Cardiac septum (tissue), 1 donor: ENCODE measurements at regions of chr14 and their contacts with region 1.

Region 1: GRCh38 chr14:61694830-61695694 is at the start of gene HIF1A:
- DNase-seq: peak; percentile 98
- total RNA-seq, gene HIF1A: 73.2 TPM

Region 2: GRCh38 chr14:61525293-61526011 is 169.6 kb before region 1 on chr14:
- intact Hi-C with region 1: no loop called
- DNase-seq: peak; percentile 87

Region 3: DNA sequence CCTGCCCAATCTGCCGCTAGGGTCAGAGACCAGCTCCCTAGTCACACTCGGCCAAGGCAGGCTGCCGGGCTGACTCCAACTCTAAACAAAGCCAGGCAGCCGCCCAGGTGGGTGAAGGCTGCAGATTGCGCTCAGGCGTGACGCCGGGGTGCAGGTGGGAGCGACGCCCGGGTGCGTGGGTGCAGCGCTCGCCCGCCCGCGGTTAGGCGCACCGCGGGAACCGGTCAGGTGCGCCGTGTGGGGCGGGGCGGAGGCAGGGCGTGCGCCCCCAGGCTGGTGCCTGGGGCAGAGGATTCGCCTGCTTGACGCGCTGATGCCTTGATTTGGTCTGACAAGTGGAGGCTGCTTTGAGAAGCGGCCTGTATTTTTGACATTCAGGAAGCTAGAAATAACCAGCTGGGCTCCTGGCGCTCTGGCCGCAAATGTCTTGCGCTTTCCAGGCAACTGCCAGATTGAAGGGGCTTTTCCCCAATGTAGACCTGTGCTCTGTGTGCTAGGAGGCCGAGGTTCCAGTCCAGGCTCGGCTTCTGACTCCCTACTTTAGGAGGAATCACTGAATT is 126.4 kb before region 1 on chr14:
- intact Hi-C with region 1: loop called (anchors 10 kb)
- DNase-seq: peak; percentile 89